Caco-2 (cell line): ENCODE measurements at regions of chr12 and their contacts with region 1.

Region 1: GRCh38 chr12:96985480-96986362 is 78.7 kb downstream of the NEDD1 start:
- DNase-seq: peak in 1 of 2 experiments; percentile 57
- H3K4me3 ChIP-seq: peak overlapping the region; percentile 21
- H3K4me3 Mint-ChIP-seq: peak overlapping the region; percentile 71
- H3K27ac Mint-ChIP-seq: no peak overlapping the region
- H3K4me1 ChIP-seq: peaks cover 5% of the 10 kb centered on the region; the same call in 1 of the 2 replicates
- H3K4me1 Mint-ChIP-seq: no peaks in the 10 kb centered on the region
- H3K27me3 ChIP-seq: no peaks in the 10 kb centered on the region; the same call in 1 of the 2 replicates
- H3K27me3 Mint-ChIP-seq: peaks cover 13% of the 10 kb centered on the region
- CTCF ChIP-seq: peak; percentile 66 to 85

Region 2: GRCh38 chr12:96710127-96710745 is 275.5 kb before region 1 on chr12:
- CTCF ChIA-PET with region 1: no interaction called
- POLR2A ChIA-PET with region 1: no interaction called
- intact Hi-C with region 1: loop called (anchors 5 kb)
- DNase-seq: peak; percentile 36 to 46
- H3K4me3 ChIP-seq: no peak overlapping the region
- H3K4me3 Mint-ChIP-seq: no peak overlapping the region
- H3K27ac Mint-ChIP-seq: no peak overlapping the region
- H3K4me1 ChIP-seq: no peaks in the 10 kb centered on the region
- H3K4me1 Mint-ChIP-seq: no peaks in the 10 kb centered on the region
- H3K27me3 ChIP-seq: no peaks in the 10 kb centered on the region
- H3K27me3 Mint-ChIP-seq: peaks cover 2% of the 10 kb centered on the region
- CTCF ChIP-seq: peak in 1 of 2 experiments; percentile 46

Region 3: DNA sequence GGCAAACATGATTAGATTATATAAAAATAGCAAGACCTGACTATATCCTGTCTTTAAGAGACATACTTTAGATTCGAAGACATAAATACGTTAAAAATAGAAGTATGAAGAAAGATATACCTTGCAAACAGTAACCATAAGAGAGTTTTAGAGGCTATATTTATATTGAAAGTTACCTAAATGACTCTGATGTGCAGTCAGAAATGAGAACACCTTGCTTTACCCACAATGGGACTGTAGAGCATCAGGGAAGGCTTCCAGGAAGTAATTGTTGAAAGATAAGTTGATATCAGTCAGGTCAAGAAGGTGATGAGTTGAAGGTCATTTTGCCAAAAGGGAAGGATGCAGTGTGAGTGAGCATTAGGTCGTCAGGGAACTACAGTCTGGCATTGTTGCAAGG is 31.5 kb after region 1 on chr12:
- CTCF ChIA-PET with region 1: no interaction called
- POLR2A ChIA-PET with region 1: no interaction called
- intact Hi-C with region 1: no loop called
- DNase-seq: no peak
- H3K4me3 ChIP-seq: no peak overlapping the region
- H3K4me3 Mint-ChIP-seq: no peak overlapping the region
- H3K27ac Mint-ChIP-seq: no peak overlapping the region
- H3K4me1 ChIP-seq: no peaks in the 10 kb centered on the region
- H3K4me1 Mint-ChIP-seq: no peaks in the 10 kb centered on the region
- H3K27me3 ChIP-seq: no peaks in the 10 kb centered on the region
- H3K27me3 Mint-ChIP-seq: no peaks in the 10 kb centered on the region
- CTCF ChIP-seq: no peak

Region 4: GRCh38 chr12:97131220-97131981 is 145.7 kb after region 1 on chr12:
- CTCF ChIA-PET with region 1: no interaction called
- POLR2A ChIA-PET with region 1: no interaction called
- intact Hi-C with region 1: loop called (anchors 5 kb)
- DNase-seq: peak in 1 of 2 experiments; percentile 18
- H3K4me3 ChIP-seq: no peak overlapping the region
- H3K4me3 Mint-ChIP-seq: no peak overlapping the region
- H3K27ac Mint-ChIP-seq: no peak overlapping the region
- H3K4me1 ChIP-seq: 0 out of 2 replicates have a peak, but pooled peaks cover 4% of the 10 kb centered on the region
- H3K4me1 Mint-ChIP-seq: peaks cover 16% of the 10 kb centered on the region
- H3K27me3 ChIP-seq: no peaks in the 10 kb centered on the region
- H3K27me3 Mint-ChIP-seq: peaks cover 6% of the 10 kb centered on the region
- CTCF ChIP-seq: no peak

Region 5: DNA sequence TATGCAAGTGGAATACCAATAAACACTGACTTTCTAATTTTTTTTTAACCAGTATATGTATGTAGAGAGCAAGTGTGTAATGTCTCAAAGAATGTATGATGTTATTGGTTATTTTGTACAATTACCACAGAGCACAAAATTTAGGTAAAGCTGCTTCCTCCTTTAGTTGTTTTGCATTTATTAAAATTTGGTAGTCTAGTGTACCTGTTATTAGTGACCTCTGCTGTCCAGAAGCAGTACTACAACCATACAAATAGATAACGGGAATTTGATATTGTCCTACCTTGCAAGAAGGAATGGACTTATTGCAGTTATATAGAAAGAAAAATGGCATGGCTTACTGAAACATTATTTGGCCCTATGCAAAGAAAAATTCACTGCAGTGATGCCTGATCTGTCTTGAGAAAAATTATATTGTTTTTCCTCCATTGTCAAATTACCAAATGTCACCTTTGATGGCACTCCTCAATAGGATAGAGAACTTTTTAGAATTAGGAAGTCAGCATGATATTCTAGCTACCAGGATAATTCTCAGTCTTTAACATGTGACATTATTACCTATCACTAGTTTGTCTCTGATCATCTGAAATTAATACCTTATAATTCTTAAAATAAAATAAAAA is 323.0 kb after region 1 on chr12:
- CTCF ChIA-PET with region 1: no interaction called
- POLR2A ChIA-PET with region 1: no interaction called
- intact Hi-C with region 1: loop called (anchors 1 kb)
- DNase-seq: peak in 1 of 2 experiments; percentile 45
- H3K4me3 ChIP-seq: no peak overlapping the region
- H3K4me3 Mint-ChIP-seq: no peak overlapping the region
- H3K27ac Mint-ChIP-seq: no peak overlapping the region
- H3K4me1 ChIP-seq: no peaks in the 10 kb centered on the region; the same call in 1 of the 2 replicates
- H3K4me1 Mint-ChIP-seq: peaks cover 6% of the 10 kb centered on the region
- H3K27me3 ChIP-seq: no peaks in the 10 kb centered on the region
- H3K27me3 Mint-ChIP-seq: no peaks in the 10 kb centered on the region
- CTCF ChIP-seq: peak; percentile 61 to 68

Region 6: GRCh38 chr12:98154850-98155249 is 1169.1 kb after region 1 on chr12:
- CTCF ChIA-PET with region 1: interaction called, 3 read pairs
- POLR2A ChIA-PET with region 1: no interaction called
- intact Hi-C with region 1: loop called (anchors 1 kb)
- DNase-seq: peak; percentile 68 to 69
- H3K4me3 ChIP-seq: no peak overlapping the region
- H3K4me3 Mint-ChIP-seq: no peak overlapping the region
- H3K27ac Mint-ChIP-seq: no peak overlapping the region
- H3K4me1 ChIP-seq: peaks cover 12% of the 10 kb centered on the region
- H3K4me1 Mint-ChIP-seq: peaks cover 28% of the 10 kb centered on the region
- H3K27me3 ChIP-seq: no peaks in the 10 kb centered on the region
- H3K27me3 Mint-ChIP-seq: no peaks in the 10 kb centered on the region
- CTCF ChIP-seq: peak; percentile 46 to 67

Region 7: DNA sequence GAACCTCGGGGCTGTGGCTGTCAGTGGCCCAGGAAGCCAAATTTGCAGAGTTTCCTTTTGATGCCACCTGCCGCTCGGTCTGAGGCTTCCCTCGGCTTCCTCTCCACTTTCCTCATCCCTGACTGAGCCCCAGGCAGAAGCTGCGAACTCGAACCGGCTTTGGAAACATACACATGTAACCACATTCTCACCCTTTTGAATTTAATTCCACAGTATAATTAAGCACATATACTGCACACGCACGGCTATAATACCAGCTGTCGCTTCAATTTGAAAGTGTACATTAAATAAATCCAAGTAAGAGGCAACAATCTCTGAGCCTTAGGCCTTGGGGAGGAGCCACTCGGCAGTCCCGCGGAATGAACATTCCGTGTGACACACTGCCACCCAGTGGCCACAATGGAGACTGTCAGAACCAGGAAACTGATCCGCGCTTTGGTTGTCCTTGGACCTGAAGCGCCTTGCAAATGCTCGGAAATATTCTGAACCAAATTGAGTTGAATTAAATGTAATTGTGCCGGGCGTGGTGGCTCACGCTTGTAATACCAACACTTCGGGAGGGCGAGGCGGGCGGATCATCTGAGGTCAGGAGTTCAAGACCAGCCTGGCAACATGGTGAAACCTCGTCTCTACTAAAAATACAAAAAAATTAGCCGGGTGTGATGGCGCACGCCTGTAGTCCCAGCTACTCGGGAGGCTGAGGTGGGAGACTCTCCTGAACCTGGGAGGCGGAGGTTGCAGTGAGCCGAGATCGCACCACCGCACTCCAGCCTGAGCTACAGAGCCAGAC is 1411.8 kb after region 1 on chr12:
- CTCF ChIA-PET with region 1: no interaction called
- POLR2A ChIA-PET with region 1: no interaction called
- intact Hi-C with region 1: loop called (anchors 5 kb)
- DNase-seq: peak; percentile 70 to 79
- H3K4me3 ChIP-seq: no peak overlapping the region
- H3K4me3 Mint-ChIP-seq: peak overlapping the region; percentile 66
- H3K27ac Mint-ChIP-seq: peak overlapping the region; percentile 65
- H3K4me1 ChIP-seq: peaks cover 36% of the 10 kb centered on the region
- H3K4me1 Mint-ChIP-seq: peaks cover 16% of the 10 kb centered on the region
- H3K27me3 ChIP-seq: no peaks in the 10 kb centered on the region
- H3K27me3 Mint-ChIP-seq: no peaks in the 10 kb centered on the region
- CTCF ChIP-seq: peak; percentile 74 to 82